ENCODE measurements at regions of chr16 and their contacts with region 1.

Region 1: GRCh38 chr16:55494994-55495421 is 13.9 kb upstream of the LPCAT2 start:
- DNase-seq: peak in 3 of 10 donors; percentile 34 to 74 (median 69)
- H3K4me3 ChIP-seq: no peak overlapping the region
- H3K27ac ChIP-seq: peak overlapping the region in 22 of 59 donors; percentile 2 to 70 (median 46)
- H3K27me3 ChIP-seq: no peaks in the 10 kb centered on the region
- CTCF ChIP-seq: peak in 55 of 56 donors; percentile 48 to 89 (median 67)

Region 2: GRCh38 chr16:55444754-55445485 is 50.1 kb before region 1 on chr16:
- intact Hi-C with region 1: no loop called
- DNase-seq: no peak
- H3K4me3 ChIP-seq: no peak overlapping the region
- H3K27ac ChIP-seq: no peak overlapping the region
- H3K27me3 ChIP-seq: peaks cover 0 to 6% (median 0%) of the 10 kb centered on the region in 45 donors
- CTCF ChIP-seq: no peak

Region 3: DNA sequence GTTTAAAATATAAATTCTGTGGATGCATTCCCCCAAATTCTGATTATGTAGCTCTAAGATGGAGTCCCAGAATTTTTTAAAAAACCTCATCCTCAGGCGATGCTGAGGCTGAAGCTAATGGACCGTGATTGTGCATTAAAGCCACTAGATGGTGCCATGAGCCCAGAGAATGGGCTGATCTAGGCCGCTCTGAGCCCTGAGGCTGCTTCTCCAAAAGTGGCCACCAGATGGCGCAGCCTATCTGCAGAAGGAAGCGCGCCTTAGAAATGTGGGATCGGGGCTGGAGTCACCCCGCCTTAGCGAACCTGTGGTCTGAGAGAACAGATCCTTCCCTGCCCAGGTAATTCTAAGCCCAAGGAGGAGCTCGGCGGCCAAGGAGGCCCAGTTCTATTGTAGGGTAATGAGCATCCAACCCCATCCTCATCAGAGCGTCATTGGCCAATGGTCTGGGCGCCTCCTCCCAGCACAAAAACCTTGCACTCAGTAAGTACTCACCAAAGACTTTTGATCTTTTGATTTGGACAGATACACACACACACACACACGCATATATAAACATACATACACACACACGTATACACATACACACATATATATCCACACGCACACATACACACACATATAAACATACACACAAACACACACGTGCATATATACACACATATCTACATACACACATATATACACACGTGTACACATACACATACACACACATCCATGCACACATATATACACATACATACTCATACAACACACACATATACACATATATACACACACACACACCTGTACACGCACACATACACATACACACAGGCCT is 29.7 kb before region 1 on chr16:
- intact Hi-C with region 1: loop called in 1 of 2 experiments (anchors 1 kb)
- DNase-seq: peak; percentile 79 to 93 (median 88)
- H3K4me3 ChIP-seq: peak overlapping the region in 22 of 59 donors; percentile 1 to 50 (median 26)
- H3K27ac ChIP-seq: no peak overlapping the region
- H3K27me3 ChIP-seq: no peaks in the 10 kb centered on the region
- CTCF ChIP-seq: peak; percentile 99 to 100 (median 100)

Region 4: DNA sequence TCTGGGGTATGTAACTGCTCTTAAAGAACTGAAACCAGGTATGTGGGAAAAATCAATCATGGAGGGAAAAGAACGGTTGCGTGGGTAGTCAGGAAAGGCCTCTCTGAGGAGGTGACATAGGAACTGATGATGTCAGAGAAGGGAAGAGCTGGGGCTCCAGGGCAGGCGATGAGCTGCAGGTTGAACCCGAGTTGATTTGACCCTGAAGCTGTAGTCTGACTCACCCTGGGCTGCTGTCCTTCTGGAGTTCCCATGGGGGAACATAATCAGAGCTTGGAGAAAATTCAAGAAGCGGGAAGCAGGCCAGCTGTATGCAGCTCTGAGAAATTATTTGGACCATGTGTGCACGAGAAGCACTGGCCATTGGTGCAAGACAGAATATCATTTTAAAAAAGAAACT is 177.5 kb after region 1 on chr16:
- intact Hi-C with region 1: loop called in 1 of 2 experiments (anchors 10 kb)
- DNase-seq: no peak
- H3K4me3 ChIP-seq: no peak overlapping the region
- H3K27ac ChIP-seq: no peak overlapping the region
- H3K27me3 ChIP-seq: peaks cover 0 to under 1% (median 0%) of the 10 kb centered on the region in 45 donors
- CTCF ChIP-seq: no peak

Region 5: DNA sequence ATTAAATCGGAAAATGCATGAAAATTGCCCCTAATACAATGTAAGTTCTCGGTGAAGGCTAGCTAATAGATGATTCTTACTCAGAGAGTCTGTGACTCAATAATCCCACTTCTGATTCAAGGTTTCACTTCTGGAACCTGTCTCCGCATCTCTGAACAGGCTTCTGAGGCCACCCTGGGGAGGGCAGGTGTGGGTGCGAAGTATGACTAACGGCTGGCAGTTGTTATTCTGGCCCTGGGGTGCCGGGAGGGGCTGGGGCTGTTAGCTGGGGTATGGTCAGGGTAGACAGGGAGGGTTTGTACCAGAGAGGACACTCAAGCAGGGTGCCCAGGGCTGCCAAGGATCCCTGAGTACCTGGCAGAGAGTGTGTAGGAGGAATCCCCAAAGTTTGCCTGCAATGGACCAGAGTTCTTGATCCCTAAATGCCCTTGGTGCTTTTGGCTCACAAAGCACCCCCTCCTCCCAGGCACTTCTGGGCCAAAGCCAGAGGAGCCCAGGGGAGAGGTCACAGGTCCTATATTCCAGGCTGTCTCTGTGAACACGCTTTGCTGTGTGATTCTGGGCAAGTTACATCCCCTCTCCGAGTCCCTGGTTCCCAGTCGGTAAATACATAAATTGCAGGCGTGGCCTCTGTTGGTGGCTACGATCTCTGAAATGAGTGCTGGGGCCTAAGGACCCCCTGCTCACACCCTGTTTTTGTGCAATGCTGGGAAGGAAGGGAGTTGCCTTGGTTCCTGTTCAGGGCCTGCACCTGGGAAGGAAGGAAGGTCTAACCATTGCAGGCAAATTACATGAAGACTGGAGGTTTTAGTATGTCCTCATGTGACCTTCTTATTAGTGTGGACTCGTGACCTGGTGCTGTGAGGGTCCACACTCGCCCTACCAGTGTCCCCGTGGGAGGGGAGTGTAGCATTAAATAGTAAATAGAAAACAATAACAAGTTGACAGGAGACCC is 1547.4 kb after region 1 on chr16:
- intact Hi-C with region 1: no loop called
- DNase-seq: no peak
- H3K4me3 ChIP-seq: no peak overlapping the region
- H3K27ac ChIP-seq: no peak overlapping the region
- H3K27me3 ChIP-seq: no peaks in the 10 kb centered on the region
- CTCF ChIP-seq: no peak

Measured in dorsolateral prefrontal cortex (tissue), 120 donors.